ENCODE measurements at regions of chr11 and their contacts with region 1.

Region 1: DNA sequence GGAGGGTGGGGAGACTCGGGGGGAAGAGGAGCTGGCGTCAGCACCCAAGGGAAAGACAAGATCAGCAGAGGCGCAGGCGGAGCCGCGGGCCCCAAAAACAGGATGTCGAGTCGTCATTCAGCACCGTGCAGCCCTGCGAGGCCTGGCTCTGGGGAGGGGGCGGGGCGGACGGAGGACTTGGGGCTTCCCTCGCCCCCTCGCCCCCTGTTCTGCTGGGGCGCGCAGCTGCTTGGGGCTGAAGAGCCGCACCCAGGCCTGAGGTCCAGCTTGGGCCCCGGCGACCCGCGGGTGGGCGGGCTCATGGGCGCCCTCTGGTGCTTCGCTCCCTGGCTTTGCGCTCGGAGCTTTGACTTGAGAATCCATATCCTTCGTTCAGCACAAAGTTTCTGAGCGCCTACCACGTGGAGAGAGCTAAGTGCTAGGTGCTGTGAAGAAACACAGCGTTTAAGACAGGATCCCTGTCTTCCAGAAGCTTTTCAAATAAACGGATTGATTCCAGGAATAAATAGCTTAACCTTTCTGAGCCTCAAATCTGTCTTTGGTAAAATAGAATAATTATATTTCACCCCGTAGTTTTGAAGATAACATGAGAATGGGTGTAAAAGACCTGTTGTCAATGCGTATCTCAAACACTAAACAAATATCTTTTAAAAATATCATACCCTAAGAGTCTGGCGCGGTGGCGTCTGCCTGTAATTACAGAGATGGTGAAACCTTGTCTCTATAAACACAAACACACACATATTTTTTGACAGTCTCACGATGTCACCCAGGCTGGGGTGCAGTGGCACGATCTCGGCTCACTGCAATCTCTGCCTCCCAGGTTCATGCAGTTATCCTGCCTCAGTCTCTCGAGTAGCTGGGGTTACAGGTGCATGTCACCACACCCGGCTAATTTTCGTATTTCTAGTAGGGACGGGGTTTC is 929 bp upstream of the RHOG start:
- DNase-seq: peak; percentile 66
- H3K27ac ChIP-seq: peak overlapping the region; percentile 93
- CTCF ChIP-seq: peak; percentile 87

Region 2: GRCh38 chr11:3685923-3686322 is 155.8 kb before region 1 on chr11:
- CTCF ChIA-PET with region 1: no interaction called
- POLR2A ChIA-PET with region 1: no interaction called
- DNase-seq: no peak
- H3K27ac ChIP-seq: no peak overlapping the region
- CTCF ChIP-seq: no peak

Region 3: DNA sequence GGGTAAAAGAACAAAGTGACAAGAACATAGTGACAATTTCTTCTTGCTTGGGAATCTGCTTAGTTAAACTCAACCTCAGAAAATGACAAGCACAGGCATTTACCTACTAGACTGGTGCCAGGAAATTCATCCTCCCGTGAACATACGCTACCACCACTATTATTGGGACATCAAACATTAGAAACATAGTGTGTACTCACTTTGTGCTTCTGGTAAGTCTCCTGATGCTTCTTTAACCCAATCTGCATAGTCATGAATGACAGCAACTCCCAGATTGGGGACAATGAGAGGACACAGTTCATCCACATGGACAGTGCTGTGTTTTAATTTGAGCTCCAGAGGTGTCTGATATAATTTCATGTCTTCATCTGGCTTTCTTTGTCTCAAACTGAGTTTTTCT is 141.3 kb before region 1 on chr11:
- CTCF ChIA-PET with region 1: no interaction called
- POLR2A ChIA-PET with region 1: no interaction called
- DNase-seq: no peak
- H3K27ac ChIP-seq: no peak overlapping the region
- CTCF ChIP-seq: no peak

Region 4: GRCh38 chr11:3807909-3808860 is 33.5 kb before region 1 on chr11 and contains the start of gene PGAP2:
- CTCF ChIA-PET with region 1: interaction called, 12 read pairs
- POLR2A ChIA-PET with region 1: interaction called, 3 read pairs
- DNase-seq: peak; percentile 66
- H3K27ac ChIP-seq: peak within 1 kb of the TSS; percentile 71
- CTCF ChIP-seq: peak; percentile 69

Region 5: GRCh38 chr11:3894128-3894731 is 52.5 kb after region 1 on chr11:
- CTCF ChIA-PET with region 1: no interaction called
- POLR2A ChIA-PET with region 1: no interaction called
- DNase-seq: no peak
- H3K27ac ChIP-seq: no peak overlapping the region
- CTCF ChIP-seq: no peak

Region 6: DNA sequence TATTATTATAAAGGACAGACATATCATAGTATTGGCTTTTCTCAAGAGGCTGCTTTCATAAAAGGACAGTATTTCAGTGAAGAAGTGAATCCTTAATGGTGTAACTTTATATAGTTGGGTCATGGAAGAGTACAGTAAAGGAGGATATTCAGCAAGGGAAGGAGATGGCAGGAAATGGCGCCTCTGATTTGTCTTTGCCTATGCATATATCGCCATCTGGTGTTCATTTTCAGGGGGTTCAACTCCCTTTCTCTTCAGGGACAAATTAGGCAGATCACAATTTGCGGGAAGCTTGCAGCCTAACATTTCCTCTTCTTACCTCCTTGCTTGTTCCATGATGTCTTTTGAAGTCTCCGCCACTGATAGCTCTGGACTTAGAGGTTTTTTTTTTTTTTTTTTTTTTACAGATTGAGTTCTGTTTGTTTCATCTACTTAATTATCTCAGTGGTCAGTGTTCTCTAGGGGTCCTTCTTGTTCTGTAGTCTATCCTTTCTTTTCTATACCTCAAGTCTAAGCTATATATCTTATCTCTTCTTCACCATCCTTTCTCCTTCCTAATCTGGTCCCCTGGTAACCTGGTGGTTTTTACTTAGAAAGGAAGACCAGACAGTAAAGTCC is 231.1 kb after region 1 on chr11:
- CTCF ChIA-PET with region 1: interaction called, 83 read pairs
- POLR2A ChIA-PET with region 1: no interaction called
- DNase-seq: peak; percentile 67
- H3K27ac ChIP-seq: no peak overlapping the region
- CTCF ChIP-seq: peak; percentile 77